ENCODE measurements at regions of chr2 and their contacts with region 1.

Region 1: DNA sequence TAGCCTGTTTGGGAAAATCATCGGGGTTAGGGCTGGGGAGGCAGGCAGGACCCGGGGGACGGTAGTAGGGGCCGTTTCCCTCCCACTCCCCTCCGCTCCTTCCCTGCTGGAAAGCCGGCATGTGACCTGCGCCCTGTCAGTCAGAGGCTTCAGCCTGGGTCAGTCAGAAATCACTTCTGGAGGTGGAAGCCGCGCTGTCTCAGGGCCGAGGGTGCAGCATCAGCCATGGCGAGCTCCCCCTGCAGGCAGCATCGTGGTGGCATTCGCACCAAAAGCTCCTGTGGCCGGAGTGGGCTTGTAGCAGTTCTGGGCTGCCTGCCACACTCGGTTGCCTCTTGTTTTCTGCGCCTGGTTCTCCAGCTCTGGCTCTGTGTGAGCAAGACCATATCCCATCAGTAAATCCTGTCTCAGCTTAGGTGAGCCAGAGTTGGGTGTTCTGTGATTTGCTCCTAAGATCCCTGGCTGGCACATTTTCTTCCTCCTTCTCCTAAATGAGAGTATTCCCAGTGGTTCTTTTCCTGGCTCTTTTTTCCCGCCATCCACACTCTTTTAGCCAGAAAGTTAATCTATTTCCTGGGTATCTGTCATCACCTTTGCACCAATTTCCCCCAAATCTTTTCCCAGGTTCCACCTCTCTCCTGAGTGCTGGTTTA is 123.9 kb upstream of the CD302 start:
- DNase-seq: peak; percentile 52
- H3K4me3 Mint-ChIP-seq: no peak overlapping the region
- H3K27ac Mint-ChIP-seq: no peak overlapping the region
- H3K4me1 Mint-ChIP-seq: peaks cover 19% of the 10 kb centered on the region
- H3K27me3 Mint-ChIP-seq: peaks cover 3% of the 10 kb centered on the region

Region 2: GRCh38 chr2:159615140-159615951 is 306.5 kb before region 1 on chr2:
- intact Hi-C with region 1: loop called (anchors 10 kb)
- DNase-seq: peak; percentile 2
- H3K4me3 Mint-ChIP-seq: peak overlapping the region; percentile 83
- H3K27ac Mint-ChIP-seq: peak overlapping the region; percentile 21
- H3K4me1 Mint-ChIP-seq: peaks cover 18% of the 10 kb centered on the region
- H3K27me3 Mint-ChIP-seq: peaks cover 32% of the 10 kb centered on the region

Region 3: GRCh38 chr2:159755788-159756187 is 166.1 kb before region 1 on chr2:
- intact Hi-C with region 1: loop called (anchors 5 kb)
- DNase-seq: no peak
- H3K4me3 Mint-ChIP-seq: no peak overlapping the region
- H3K27ac Mint-ChIP-seq: no peak overlapping the region
- H3K4me1 Mint-ChIP-seq: peaks cover 31% of the 10 kb centered on the region
- H3K27me3 Mint-ChIP-seq: no peaks in the 10 kb centered on the region

Region 4: GRCh38 chr2:159797543-159798375 is 124.1 kb before region 1 on chr2 and contains the start of gene CD302:
- intact Hi-C with region 1: loop called (anchors 5 kb)
- DNase-seq: no peak
- H3K4me3 Mint-ChIP-seq: peak within 1 kb of the TSS; percentile 61
- H3K27ac Mint-ChIP-seq: no peak within 1 kb of the TSS
- H3K4me1 Mint-ChIP-seq: peaks cover 14% of the 10 kb centered on the region
- H3K27me3 Mint-ChIP-seq: peaks cover 55% of the 10 kb centered on the region
- total RNA-seq, gene CD302: 0.44 and 0.47 TPM in 2 replicates

Region 5: DNA sequence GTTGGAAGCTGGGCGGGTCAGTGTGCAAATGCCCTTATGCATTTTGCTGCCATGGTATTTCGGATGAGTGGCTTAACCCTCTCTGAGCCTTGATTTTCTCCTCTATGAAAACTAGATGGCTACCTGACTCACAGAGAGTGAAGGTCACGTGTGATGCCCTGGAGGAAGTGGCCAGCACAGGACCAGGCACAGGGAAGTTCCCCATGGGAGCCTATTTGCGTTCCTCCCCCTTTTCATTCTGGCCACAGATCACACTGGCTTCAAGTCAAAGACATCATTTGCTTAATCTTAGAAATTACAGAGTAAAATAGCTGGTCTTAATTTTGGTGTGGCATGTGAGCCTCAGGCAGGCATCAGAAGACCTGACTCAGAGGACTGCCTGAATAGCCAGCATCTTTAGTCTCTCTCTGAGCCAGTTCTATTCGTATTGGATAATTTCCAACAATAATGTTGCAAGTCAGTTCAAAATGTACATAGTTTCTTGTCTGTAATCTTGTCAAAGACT is 66.3 kb before region 1 on chr2:
- intact Hi-C with region 1: loop called (anchors 5 kb)
- DNase-seq: no peak
- H3K4me3 Mint-ChIP-seq: no peak overlapping the region
- H3K27ac Mint-ChIP-seq: no peak overlapping the region
- H3K4me1 Mint-ChIP-seq: peaks cover 6% of the 10 kb centered on the region
- H3K27me3 Mint-ChIP-seq: no peaks in the 10 kb centered on the region

Region 6: GRCh38 chr2:159904127-159904958 is 17.5 kb before region 1 on chr2:
- intact Hi-C with region 1: loop called (anchors 1 kb)
- DNase-seq: peak; percentile 69
- H3K4me3 Mint-ChIP-seq: peak within 1 kb of the TSS; percentile 92
- H3K27ac Mint-ChIP-seq: peak within 1 kb of the TSS; percentile 91
- H3K4me1 Mint-ChIP-seq: peaks cover 41% of the 10 kb centered on the region
- H3K27me3 Mint-ChIP-seq: no peaks in the 10 kb centered on the region

Region 7: DNA sequence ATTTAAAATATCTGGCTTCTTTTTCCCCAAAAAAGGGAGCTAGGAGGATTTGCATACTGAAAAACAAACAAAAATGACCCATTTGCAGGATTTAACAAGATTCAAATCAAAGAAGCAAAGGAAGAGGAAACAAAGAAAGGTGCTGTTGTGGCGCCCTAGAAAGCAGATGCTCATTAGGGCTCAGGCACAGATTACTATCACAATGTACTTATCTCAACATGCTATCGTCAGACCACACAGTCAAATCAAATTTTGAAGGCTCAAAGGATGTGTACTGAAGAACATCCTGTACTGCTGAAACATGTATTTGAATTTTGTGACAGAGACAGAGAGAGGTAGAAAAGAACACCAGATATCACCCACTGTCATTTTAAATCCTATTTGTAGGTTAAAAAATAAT is 560.8 kb after region 1 on chr2:
- intact Hi-C with region 1: no loop called
- DNase-seq: peak; percentile 11
- H3K4me3 Mint-ChIP-seq: peak overlapping the region; percentile 5
- H3K27ac Mint-ChIP-seq: peak overlapping the region; percentile 59
- H3K4me1 Mint-ChIP-seq: peaks cover 59% of the 10 kb centered on the region
- H3K27me3 Mint-ChIP-seq: no peaks in the 10 kb centered on the region